A673 (cell line): ENCODE measurements at regions of chr10 and their contacts with region 1.

Region 1: GRCh38 chr10:28012990-28013515 is 14.2 kb upstream of the ODAD2 start:
- DNase-seq: peak; percentile 44
- H3K4me3 ChIP-seq: no peak overlapping the region
- H3K27ac ChIP-seq: no peak overlapping the region
- H3K4me1 ChIP-seq: peaks cover 7% of the 10 kb centered on the region
- H3K27me3 ChIP-seq: peaks cover 67% of the 10 kb centered on the region
- CTCF ChIP-seq: no peak

Region 2: DNA sequence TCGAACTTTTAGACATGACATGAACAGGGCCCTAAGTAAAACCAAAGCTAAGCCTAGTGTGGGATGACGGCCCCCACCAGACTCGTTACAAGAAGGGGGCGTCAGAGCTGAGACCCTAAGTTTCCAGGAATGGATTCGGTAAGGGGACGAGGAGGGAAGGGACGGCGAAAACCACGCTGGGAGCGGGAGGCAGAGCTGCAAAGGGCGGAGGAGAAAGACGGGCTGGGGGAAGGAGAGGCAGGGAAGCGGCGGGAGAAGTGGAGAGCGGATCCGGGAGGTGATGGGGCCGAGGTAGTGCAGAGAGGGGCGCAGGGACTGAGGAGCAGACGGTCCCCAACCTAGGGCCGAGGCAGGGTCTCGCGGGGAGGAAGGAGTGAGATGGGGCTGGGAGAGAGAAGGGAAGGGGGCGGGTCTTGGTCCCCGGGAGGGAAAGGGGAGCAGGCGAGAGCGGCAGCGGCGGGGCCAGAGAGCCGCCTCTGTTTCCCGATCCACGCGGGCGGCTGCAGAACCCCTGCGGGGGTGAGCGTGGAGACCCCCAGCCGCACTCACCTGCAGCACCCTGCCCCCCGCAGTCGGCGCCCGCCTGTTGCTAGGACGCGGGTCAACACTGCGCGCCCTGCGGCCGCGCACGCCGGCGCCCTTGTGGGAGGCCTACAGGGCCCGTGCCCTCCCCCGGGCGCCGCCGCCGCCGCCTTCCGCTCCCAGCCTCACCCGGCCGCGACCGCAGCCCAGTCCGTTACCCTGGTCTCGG is 14.6 kb before region 1 on chr10:
- CTCF ChIA-PET with region 1: no interaction called
- POLR2A ChIA-PET with region 1: no interaction called
- intact Hi-C with region 1: no loop called
- DNase-seq: peak; percentile 31
- H3K4me3 ChIP-seq: peak overlapping the region; percentile 51
- H3K27ac ChIP-seq: no peak overlapping the region
- H3K4me1 ChIP-seq: no peaks in the 10 kb centered on the region
- H3K27me3 ChIP-seq: peaks cover 51% of the 10 kb centered on the region
- CTCF ChIP-seq: no peak

Region 3: GRCh38 chr10:28047061-28047460 is 34.0 kb after region 1 on chr10:
- CTCF ChIA-PET with region 1: no interaction called
- POLR2A ChIA-PET with region 1: interaction called, 23 read pairs
- intact Hi-C with region 1: no loop called
- DNase-seq: peak; percentile 6
- H3K4me3 ChIP-seq: no peak overlapping the region
- H3K27ac ChIP-seq: no peak overlapping the region
- H3K4me1 ChIP-seq: no peaks in the 10 kb centered on the region
- H3K27me3 ChIP-seq: no peaks in the 10 kb centered on the region
- CTCF ChIP-seq: no peak